Left cardiac atrium (tissue), 4 donors: ENCODE measurements at regions of chr11 and their contacts with region 1.

Region 1: GRCh38 chr11:66222358-66223149 is 45.9 kb upstream of the RAB1B start:
- DNase-seq: peak; percentile 91
- ATAC-seq: peak; percentile 85 to 93

Region 2: GRCh38 chr11:66258473-66258893 is 35.9 kb after region 1 on chr11:
- intact Hi-C with region 1: loop called in 1 of 2 experiments (anchors 2 kb)
- DNase-seq: no peak
- ATAC-seq: no peak

Region 3: GRCh38 chr11:66282468-66283386 is 60.2 kb after region 1 on chr11:
- intact Hi-C with region 1: loop called in 1 of 2 experiments (anchors 10 kb)
- DNase-seq: peak; percentile 99
- ATAC-seq: peak; percentile 84 to 86